BJ (cell line): ENCODE measurements at regions of chr4 and their contacts with region 1.

Region 1: DNA sequence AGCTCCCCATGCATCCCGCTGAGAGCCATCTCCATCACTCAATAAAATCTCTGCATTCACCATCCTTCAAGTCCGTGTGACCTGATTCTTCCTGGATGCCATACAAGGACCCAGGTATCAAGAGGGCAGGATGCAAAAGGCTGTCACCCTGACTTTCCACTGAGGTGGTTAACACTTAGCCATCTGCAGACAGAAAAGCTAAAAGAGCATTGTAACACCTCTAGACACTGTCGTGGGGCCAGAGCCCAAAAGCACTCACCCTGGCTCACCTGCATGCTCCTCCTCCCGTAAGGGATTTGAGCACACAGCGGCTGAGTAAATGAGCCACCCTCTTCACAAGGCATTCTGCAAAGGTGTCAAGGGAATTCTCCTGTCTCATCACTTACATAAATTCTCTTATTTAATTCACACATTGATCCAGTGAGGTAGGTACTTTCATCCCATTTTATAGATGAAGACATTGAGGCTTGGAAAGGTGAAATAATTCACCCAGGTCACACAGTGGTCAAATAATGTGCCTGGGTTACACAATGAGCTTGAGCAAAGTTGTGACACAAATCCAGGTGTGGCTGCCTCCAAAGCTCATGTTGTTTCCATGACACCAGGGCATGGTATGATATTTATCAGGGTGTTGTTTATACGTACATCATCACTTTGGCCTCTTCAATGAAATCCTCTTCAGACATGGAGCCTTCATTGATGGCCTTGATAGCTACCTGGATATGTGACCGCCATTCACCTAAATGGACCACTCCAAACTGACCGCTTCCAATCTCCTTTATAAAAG is 48.0 kb downstream of the TXK start:
- DNase-seq: no peak
- H3K4me3 ChIP-seq: no peak overlapping the region
- H3K27me3 ChIP-seq: no peaks in the 10 kb centered on the region
- CTCF ChIP-seq: no peak

Region 2: GRCh38 chr4:48002267-48002666 is 83.7 kb before region 1 on chr4:
- CTCF ChIA-PET with region 1: interaction called, 16 read pairs
- POLR2A ChIA-PET with region 1: no interaction called
- DNase-seq: no peak
- H3K4me3 ChIP-seq: no peak overlapping the region
- H3K27me3 ChIP-seq: no peaks in the 10 kb centered on the region
- CTCF ChIP-seq: no peak

Region 3: GRCh38 chr4:48008021-48008596 is 77.9 kb before region 1 on chr4:
- CTCF ChIA-PET with region 1: interaction called, 16 read pairs
- POLR2A ChIA-PET with region 1: no interaction called
- DNase-seq: no peak
- H3K4me3 ChIP-seq: no peak overlapping the region
- H3K27me3 ChIP-seq: no peaks in the 10 kb centered on the region
- CTCF ChIP-seq: no peak

Region 4: DNA sequence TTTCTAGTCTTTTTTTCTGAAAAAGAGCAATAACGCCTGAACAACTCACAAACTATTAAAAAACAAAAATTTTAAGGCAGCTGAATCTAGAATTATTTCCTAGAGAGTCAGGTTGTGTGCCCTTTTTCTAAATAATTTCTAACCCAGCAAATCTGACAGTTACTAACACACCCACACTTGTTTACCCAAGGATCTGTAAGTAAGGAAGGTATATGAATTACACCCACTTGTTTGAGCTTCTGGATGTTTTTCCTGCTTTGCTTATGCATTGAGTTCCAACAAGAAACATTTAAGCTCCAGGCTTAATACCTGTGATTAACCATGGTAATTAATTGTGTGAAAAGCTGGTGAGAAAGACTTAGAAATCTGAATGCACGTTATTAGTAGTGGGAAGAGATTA is 67.9 kb before region 1 on chr4:
- CTCF ChIA-PET with region 1: interaction called, 10 read pairs
- POLR2A ChIA-PET with region 1: no interaction called
- DNase-seq: no peak
- H3K4me3 ChIP-seq: no peak overlapping the region
- H3K27me3 ChIP-seq: no peaks in the 10 kb centered on the region
- CTCF ChIP-seq: no peak

Region 5: DNA sequence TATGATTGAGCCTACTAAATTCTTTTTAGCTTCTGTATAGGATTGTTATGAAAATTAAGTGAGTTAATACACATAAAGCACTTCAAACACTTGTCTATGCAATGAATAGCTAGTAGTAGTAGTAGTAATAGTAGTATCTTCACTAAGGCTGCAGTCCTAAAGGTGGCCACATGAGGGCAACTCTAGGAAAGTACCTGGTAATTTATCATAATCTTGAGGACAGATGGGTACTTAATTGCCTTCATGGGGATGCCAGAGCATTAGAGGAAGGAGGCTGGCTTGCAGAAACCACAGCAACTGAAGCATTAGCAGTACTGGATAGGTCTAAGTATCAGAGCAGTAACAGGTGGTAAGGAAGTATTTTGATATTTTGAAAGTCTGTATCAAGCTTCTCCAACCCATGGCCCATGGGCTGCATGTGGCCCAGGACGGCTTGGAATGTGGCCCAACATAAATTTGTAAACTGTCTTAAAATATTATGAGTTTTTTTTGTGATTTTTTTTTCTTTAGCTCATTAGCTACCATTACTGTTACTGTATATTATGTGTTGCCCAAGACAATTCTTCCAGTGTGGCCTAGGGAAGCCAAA is 52.1 kb before region 1 on chr4:
- CTCF ChIA-PET with region 1: interaction called, 39 read pairs
- POLR2A ChIA-PET with region 1: no interaction called
- DNase-seq: no peak
- H3K4me3 ChIP-seq: no peak overlapping the region
- H3K27me3 ChIP-seq: no peaks in the 10 kb centered on the region
- CTCF ChIP-seq: peak; percentile 60; the same call in 1 of the 2 replicates

Region 6: GRCh38 chr4:48141048-48141447 is 55.0 kb after region 1 on chr4:
- CTCF ChIA-PET with region 1: interaction called, 13 read pairs
- POLR2A ChIA-PET with region 1: no interaction called
- DNase-seq: no peak
- H3K4me3 ChIP-seq: no peak overlapping the region
- H3K27me3 ChIP-seq: peaks cover 1% of the 10 kb centered on the region; the same call in 1 of the 2 replicates
- CTCF ChIP-seq: peak; percentile 42